ENCODE measurements at regions of chr3 and their contacts with region 1.

Region 1: DNA sequence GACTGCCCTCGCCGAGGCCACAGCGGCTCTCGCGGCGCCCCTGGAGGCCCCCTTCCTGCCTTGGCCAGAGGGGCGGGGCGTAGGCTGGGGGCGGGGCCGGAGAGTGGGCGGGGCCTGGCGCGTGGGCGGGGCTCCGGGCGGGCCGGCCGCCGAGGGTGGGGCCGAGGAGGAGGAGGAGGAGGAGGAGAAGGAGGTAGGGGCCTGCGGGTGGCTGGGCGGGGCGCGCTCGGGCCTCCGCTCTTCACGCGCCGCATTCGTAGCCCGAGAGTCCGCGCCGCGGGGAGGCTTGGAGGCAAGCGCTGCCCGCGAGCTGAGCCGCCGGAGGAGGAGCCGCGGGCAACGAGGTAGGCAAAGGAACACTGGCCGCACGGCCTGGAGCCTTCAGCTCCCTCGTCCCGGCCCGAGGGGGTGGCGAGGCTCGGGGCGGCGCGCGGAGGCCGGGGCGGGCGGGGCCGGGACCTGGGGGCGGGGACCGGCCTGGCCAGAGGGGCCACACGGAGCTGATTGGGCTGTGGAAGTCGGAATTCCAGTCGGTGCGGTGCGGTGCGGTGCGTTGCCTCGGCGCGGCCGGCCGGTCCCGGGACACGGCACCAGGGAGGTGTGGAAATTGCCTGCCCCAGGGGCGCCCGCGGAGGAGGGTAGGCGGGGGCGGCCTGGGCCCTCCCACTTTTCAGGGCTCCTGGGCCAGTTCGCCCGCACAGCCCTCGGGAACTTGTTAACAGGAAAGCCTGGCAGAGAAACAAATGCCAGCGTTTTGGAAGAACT is at the start of gene PPP2R3A:
- DNase-seq: peak; percentile 87
- H3K4me3 Mint-ChIP-seq: peak within 1 kb of the TSS; percentile 77
- H3K27ac Mint-ChIP-seq: peak within 1 kb of the TSS; percentile 87
- H3K4me1 Mint-ChIP-seq: peaks cover 29% of the 10 kb centered on the region
- H3K27me3 Mint-ChIP-seq: no peaks in the 10 kb centered on the region
- CTCF ChIP-seq: no peak
- total RNA-seq, gene PPP2R3A: 7.1 and 7.5 TPM in 2 replicates

Region 2: GRCh38 chr3:134956395-134956794 is 1009.3 kb before region 1 on chr3:
- CTCF ChIA-PET with region 1: no interaction called
- POLR2A ChIA-PET with region 1: no interaction called
- intact Hi-C with region 1: no loop called
- DNase-seq: no peak
- H3K4me3 Mint-ChIP-seq: no peak overlapping the region
- H3K27ac Mint-ChIP-seq: no peak overlapping the region
- H3K4me1 Mint-ChIP-seq: no peaks in the 10 kb centered on the region
- H3K27me3 Mint-ChIP-seq: no peaks in the 10 kb centered on the region
- CTCF ChIP-seq: no peak

Region 3: GRCh38 chr3:135918580-135918962 is 47.1 kb before region 1 on chr3:
- CTCF ChIA-PET with region 1: interaction called, 7 read pairs
- POLR2A ChIA-PET with region 1: interaction called, 5 read pairs
- intact Hi-C with region 1: loop called (anchors 1 kb)
- DNase-seq: peak; percentile 52
- H3K4me3 Mint-ChIP-seq: no peak overlapping the region
- H3K27ac Mint-ChIP-seq: no peak overlapping the region
- H3K4me1 Mint-ChIP-seq: peaks cover 18% of the 10 kb centered on the region
- H3K27me3 Mint-ChIP-seq: no peaks in the 10 kb centered on the region
- CTCF ChIP-seq: peak; percentile 33

Region 4: GRCh38 chr3:135929670-135930069 is 36.0 kb before region 1 on chr3:
- CTCF ChIA-PET with region 1: interaction called, 3 read pairs
- POLR2A ChIA-PET with region 1: interaction called, 32 read pairs
- intact Hi-C with region 1: no loop called
- DNase-seq: peak; percentile 72
- H3K4me3 Mint-ChIP-seq: peak overlapping the region; percentile 22
- H3K27ac Mint-ChIP-seq: peak overlapping the region; percentile 92
- H3K4me1 Mint-ChIP-seq: peaks cover 42% of the 10 kb centered on the region
- H3K27me3 Mint-ChIP-seq: no peaks in the 10 kb centered on the region
- CTCF ChIP-seq: no peak

Region 5: DNA sequence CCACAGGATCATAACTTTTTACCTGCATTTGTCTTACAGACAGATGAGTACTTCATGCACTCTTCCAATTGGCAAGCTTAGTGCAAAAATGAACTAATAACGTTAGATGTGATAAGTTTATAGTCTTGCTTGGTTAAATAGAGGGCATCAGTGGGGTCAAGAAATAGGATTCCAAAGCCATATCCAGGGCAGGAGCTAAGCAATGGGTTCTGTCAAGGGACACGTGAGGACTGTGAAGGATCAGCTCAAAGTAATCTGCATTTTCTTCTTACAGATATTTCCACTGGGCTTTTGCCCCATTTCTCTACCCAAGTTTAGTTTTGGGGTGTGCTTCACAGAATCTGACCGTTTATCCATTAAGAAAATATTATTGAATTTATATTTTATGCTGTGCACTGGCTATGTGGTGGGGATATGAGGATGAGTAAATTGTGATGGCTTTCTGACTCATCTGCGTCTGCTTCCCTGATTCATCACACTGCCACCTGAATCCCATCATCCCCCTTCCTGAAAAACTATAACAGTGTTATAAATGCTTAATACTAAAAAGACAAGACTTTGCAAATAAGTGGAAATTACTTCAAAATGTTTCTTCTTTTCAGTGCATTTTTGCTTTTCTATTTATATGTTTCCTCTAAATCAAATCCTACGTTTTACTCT is 17.4 kb after region 1 on chr3:
- CTCF ChIA-PET with region 1: interaction called, 4 read pairs
- POLR2A ChIA-PET with region 1: interaction called, 5 read pairs
- intact Hi-C with region 1: loop called (anchors 1 kb)
- DNase-seq: peak; percentile 47
- H3K4me3 Mint-ChIP-seq: no peak overlapping the region
- H3K27ac Mint-ChIP-seq: peak overlapping the region; percentile 36
- H3K4me1 Mint-ChIP-seq: peaks cover 21% of the 10 kb centered on the region
- H3K27me3 Mint-ChIP-seq: no peaks in the 10 kb centered on the region
- CTCF ChIP-seq: no peak

Region 6: DNA sequence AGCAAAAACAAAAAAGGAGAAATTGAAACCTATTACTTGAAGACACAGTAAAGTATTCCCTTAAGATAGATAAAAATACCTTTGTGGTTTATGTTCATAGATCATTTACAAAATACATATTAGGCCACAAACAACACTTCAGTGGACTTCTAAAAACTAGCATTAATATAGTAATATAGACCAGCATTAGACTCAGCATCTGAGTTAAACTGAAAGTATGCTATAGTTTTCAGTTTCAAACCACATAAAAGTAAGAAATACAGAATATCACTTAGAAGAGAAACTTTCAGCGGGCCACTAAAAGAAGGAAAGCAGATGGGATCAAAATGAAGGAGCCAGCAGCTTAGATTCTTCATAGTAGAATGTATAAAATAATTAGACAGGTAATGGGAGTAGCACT is 143.8 kb after region 1 on chr3:
- CTCF ChIA-PET with region 1: no interaction called
- POLR2A ChIA-PET with region 1: no interaction called
- intact Hi-C with region 1: no loop called
- DNase-seq: no peak
- H3K4me3 Mint-ChIP-seq: no peak overlapping the region
- H3K27ac Mint-ChIP-seq: no peak overlapping the region
- H3K4me1 Mint-ChIP-seq: no peaks in the 10 kb centered on the region
- H3K27me3 Mint-ChIP-seq: no peaks in the 10 kb centered on the region
- CTCF ChIP-seq: no peak

Region 7: GRCh38 chr3:136380530-136380929 is 414.8 kb after region 1 on chr3:
- CTCF ChIA-PET with region 1: no interaction called
- POLR2A ChIA-PET with region 1: no interaction called
- intact Hi-C with region 1: no loop called
- DNase-seq: no peak
- H3K4me3 Mint-ChIP-seq: no peak overlapping the region
- H3K27ac Mint-ChIP-seq: no peak overlapping the region
- H3K4me1 Mint-ChIP-seq: no peaks in the 10 kb centered on the region
- H3K27me3 Mint-ChIP-seq: no peaks in the 10 kb centered on the region
- CTCF ChIP-seq: no peak

Measured in MCF 10A (cell line).